ENCODE measurements at regions of chr1 and their contacts with region 1.

Region 1: DNA sequence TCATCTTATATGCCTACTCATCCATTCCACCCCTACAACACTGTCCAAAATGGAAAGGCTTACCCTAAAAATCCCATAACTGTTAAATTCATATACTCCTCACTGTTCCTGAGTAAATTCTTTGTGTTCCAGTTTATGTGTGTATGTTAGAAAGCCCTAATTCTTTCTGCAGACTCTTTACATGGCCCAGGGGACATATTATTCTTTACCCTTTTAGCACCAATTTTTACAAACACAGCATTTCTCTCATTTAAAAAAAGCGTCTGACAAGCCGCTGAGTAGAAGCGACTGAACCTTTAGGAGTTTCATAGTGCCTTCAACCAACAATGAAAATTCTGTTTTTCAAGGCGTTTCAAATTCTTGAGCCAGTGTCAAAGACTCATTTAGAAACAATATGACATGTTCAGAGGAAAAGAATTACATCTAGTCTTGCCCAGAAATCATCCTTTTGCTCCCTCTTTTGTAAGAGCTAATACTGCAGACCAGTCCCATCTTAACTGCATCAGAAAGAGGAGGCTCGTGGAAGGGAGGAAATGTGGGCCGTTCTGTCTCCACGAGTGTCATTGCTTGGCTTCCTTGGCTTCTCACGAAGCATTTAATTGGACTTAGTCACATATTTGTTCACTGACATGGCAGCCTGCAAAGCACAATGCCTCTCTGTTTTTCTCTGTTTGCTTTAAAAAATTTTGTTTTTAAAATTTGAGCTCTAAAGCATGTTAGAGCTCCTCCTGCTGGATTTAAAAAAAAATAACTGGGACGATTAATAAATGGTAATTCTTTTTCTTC is 21.3 kb upstream of the C1orf105 start:
- DNase-seq: peak; percentile 37
- H3K4me3 Mint-ChIP-seq: peak overlapping the region; percentile 19
- H3K27ac Mint-ChIP-seq: peak overlapping the region; percentile 54
- H3K4me1 Mint-ChIP-seq: peaks cover 68% of the 10 kb centered on the region
- H3K27me3 Mint-ChIP-seq: no peaks in the 10 kb centered on the region

Region 2: DNA sequence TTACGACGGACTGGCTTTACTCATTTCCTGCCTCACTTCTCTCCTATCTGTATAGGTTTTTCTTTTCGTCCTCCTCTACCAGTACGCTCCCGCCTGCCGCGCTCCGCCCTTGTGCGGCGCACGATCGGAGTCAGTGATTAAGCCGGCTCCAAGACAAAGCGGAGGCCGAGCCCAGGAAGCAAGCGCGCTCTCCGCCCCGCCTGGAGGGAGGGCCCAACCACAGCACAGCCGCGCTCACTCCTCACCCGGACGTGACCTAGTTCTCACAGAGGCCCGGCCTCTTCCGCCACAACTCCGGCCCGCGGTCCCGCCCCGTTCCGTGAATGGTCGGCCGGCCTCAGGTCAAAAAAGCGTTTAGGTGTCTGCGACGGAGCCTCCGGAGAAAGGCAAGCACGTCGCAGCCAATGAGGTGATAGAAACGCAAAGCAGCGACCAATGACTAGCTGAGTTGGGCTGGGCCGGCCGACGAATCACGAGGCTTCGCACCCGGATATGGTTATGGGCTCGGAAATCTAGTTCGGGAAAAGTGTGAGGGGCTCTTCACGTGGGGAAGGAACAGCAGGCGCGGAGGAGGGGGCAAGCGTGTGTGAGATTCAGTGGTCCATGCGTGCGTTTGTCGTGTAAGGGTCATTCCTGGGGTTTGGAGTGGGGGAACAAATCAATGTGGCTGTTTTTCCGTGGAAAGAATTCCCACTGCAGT is 617.8 kb before region 1 on chr1 and contains the start of gene METTL13:
- CTCF ChIA-PET with region 1: no interaction called
- intact Hi-C with region 1: loop called (anchors 5 kb)
- DNase-seq: peak; percentile 99
- H3K4me3 Mint-ChIP-seq: peak within 1 kb of the TSS; percentile 100
- H3K27ac Mint-ChIP-seq: peak within 1 kb of the TSS; percentile 98
- H3K4me1 Mint-ChIP-seq: peaks cover 49% of the 10 kb centered on the region
- H3K27me3 Mint-ChIP-seq: no peaks in the 10 kb centered on the region
- total RNA-seq, gene METTL13: 39.5 to 40.9 TPM

Region 3: GRCh38 chr1:172135076-172135672 is 264.0 kb before region 1 on chr1:
- CTCF ChIA-PET with region 1: interaction called, 11 read pairs
- intact Hi-C with region 1: loop called (anchors 1 kb)
- DNase-seq: peak; percentile 43
- H3K4me3 Mint-ChIP-seq: no peak overlapping the region
- H3K27ac Mint-ChIP-seq: no peak overlapping the region
- H3K4me1 Mint-ChIP-seq: peaks cover 17% of the 10 kb centered on the region
- H3K27me3 Mint-ChIP-seq: no peaks in the 10 kb centered on the region

Region 4: GRCh38 chr1:172269644-172270043 is 129.5 kb before region 1 on chr1:
- CTCF ChIA-PET with region 1: interaction called, 7 read pairs
- intact Hi-C with region 1: loop called (anchors 1 kb)
- DNase-seq: no peak
- H3K4me3 Mint-ChIP-seq: no peak overlapping the region
- H3K27ac Mint-ChIP-seq: peak overlapping the region; percentile 41
- H3K4me1 Mint-ChIP-seq: peaks cover 41% of the 10 kb centered on the region
- H3K27me3 Mint-ChIP-seq: no peaks in the 10 kb centered on the region

Region 5: DNA sequence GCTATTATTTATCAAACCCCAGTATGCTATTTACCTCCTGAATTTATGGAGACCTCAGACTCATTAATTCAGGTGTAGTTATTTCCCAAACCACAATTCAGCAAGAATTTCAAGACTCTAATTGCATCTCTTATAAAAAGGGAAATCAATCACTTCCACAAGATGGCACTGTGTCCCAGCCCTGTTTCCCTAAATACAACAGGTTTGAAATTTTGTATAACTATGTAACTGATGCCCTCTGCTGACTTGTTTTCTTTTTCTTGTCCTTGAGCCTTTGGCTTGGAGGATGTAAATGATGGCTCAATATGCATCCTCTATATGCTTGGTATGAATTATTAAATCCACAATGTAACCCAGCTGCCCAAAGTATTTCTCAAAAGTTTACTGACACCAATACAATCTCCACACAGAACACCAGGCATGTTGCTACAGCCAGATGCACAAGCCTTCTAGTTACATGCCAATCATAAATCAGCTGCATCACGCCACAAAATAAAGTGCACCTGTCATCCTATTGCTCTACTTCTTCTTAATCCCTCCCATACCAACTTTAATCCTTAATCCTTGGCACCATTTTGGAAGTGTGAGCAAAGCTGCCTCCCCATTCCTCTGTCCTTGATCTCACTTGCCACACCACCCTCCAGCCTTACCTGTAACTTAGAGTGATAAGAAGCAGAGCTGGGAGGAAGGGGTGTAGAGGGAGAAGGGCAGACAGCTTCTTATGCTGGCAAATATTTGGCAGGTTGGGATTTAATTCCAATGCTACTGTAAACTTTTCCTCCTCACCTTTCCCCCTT is 30.4 kb after region 1 on chr1:
- CTCF ChIA-PET with region 1: interaction called, 6 read pairs
- intact Hi-C with region 1: loop called (anchors 1 kb)
- DNase-seq: peak; percentile 77
- H3K4me3 Mint-ChIP-seq: no peak overlapping the region
- H3K27ac Mint-ChIP-seq: no peak overlapping the region
- H3K4me1 Mint-ChIP-seq: peaks cover 46% of the 10 kb centered on the region
- H3K27me3 Mint-ChIP-seq: no peaks in the 10 kb centered on the region

Region 6: GRCh38 chr1:172699111-172699510 is 299.9 kb after region 1 on chr1:
- CTCF ChIA-PET with region 1: no interaction called
- intact Hi-C with region 1: loop called (anchors 1 kb)
- DNase-seq: peak; percentile 88
- H3K4me3 Mint-ChIP-seq: peak overlapping the region; percentile 36
- H3K27ac Mint-ChIP-seq: peak overlapping the region; percentile 89
- H3K4me1 Mint-ChIP-seq: peaks cover 53% of the 10 kb centered on the region
- H3K27me3 Mint-ChIP-seq: no peaks in the 10 kb centered on the region

Measured in activated naive CD4-positive, alpha-beta T cell treated with anti-CD3 and anti-CD28 coated beads for 36 hours (primary cell).